ENCODE measurements at regions of chr10 and their contacts with region 1.

Region 1: DNA sequence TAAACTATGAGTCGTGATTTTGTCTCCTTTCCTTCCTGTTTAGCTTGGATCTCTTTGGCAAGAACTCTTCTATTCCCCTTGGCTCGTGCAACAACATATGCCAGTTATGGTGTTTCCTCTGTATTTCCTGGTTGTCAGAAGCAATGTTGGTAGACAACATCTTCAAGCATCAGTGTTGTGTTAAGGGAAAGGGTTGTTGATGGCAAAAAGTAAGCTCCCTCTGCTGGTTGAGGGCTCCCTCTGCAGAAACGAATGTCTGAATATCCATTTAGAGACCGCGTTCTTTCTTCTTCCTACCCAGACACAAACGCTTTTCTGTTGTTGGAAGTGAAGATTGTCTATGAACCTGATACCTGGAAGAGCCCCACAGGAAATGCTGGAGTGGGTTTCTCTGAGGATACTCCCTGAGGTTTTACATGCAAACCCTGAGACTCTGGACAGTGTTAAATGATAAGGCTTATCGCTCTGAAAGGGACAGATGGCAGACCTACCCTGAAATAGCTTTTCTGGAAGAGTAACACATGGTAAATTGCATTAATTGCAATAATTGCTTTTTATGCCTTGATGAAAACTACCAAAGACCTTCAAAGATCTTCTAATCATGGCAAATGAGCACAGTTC is 23.5 kb upstream of the C1QL3 start:
- DNase-seq: no peak
- ATAC-seq: no peak
- H3K4me3 ChIP-seq: no peak overlapping the region
- H3K27ac ChIP-seq: no peak overlapping the region
- H3K4me1 ChIP-seq: no peaks in the 10 kb centered on the region
- H3K27me3 ChIP-seq: no peaks in the 10 kb centered on the region

Region 2: DNA sequence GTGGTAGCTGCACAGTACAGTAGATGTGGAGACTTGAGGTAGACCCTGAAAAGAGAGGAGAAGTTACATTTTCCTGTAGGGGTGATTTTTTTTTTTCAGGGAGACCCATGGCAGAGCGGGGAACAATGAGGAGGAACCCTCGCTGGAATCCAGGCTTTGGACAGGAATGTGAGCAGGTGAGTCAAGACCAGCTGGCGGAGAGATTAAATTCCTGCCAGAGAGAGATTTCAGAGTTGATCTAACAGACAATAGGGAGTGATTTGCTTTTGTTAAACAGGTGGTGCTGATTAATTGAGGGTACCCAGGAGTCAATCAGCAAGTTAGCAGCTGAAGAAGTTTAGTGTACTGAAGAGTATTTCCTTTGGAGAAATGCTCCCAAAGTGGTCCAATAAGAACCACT is 643.3 kb before region 1 on chr10:
- intact Hi-C with region 1: loop called in 1 of 2 experiments (anchors 10 kb)
- DNase-seq: no peak
- ATAC-seq: no peak
- H3K4me3 ChIP-seq: no peak overlapping the region
- H3K27ac ChIP-seq: no peak overlapping the region
- H3K4me1 ChIP-seq: no peaks in the 10 kb centered on the region
- H3K27me3 ChIP-seq: no peaks in the 10 kb centered on the region

Region 3: GRCh38 chr10:16520900-16521299 is 24.3 kb before region 1 on chr10:
- intact Hi-C with region 1: no loop called
- DNase-seq: peak in 1 of 2 donors; percentile 77
- ATAC-seq: no peak
- H3K4me3 ChIP-seq: peak overlapping the region; percentile 42 to 69
- H3K27ac ChIP-seq: no peak overlapping the region
- H3K4me1 ChIP-seq: no peaks in the 10 kb centered on the region
- H3K27me3 ChIP-seq: no peaks in the 10 kb centered on the region

Region 4: DNA sequence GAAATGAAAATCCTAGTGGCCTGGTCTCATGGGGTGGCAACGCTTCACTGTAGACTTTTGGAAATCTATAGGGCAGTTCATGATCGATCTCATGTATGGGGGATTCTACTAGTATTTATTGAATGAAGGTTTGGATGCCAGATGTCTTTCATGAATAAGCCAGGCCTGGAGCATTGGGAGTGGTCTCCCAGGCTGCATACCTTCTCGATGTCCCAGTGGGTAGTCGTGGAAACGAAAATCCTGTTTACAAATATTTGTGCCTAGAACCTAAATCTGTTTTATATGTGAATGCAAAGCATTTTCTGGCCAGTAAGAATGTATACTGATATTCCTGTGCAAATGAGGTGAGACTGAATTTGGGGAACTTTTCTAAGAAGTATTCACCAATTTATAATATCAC is 81.5 kb after region 1 on chr10:
- intact Hi-C with region 1: no loop called
- DNase-seq: no peak
- ATAC-seq: no peak
- H3K4me3 ChIP-seq: no peak overlapping the region
- H3K27ac ChIP-seq: no peak overlapping the region
- H3K4me1 ChIP-seq: no peaks in the 10 kb centered on the region
- H3K27me3 ChIP-seq: no peaks in the 10 kb centered on the region

Measured in aorta (tissue), 5 donors.